H1 (cell line): ENCODE measurements at regions of chr10 and their contacts with region 1.

Region 1: GRCh38 chr10:511101-511848 is 178.2 kb downstream of the DIP2C start:
- DNase-seq: peak; percentile 94 to 97
- H3K4me3 ChIP-seq: no peak overlapping the region
- H3K27ac ChIP-seq: no peak overlapping the region
- H3K4me1 ChIP-seq: no peaks in the 10 kb centered on the region; a peak in 2 of 7 replicates
- H3K27me3 ChIP-seq: peaks cover 23 to 45% (median 38%) of the 10 kb centered on the region in 4 experiments
- CTCF ChIP-seq: peak; percentile 92 to 99 (median 99)
- EP300 ChIP-seq: no peak
- POLR2A ChIP-seq: no peak
- RAD21 ChIP-seq: peak; percentile 89 to 95

Region 2: DNA sequence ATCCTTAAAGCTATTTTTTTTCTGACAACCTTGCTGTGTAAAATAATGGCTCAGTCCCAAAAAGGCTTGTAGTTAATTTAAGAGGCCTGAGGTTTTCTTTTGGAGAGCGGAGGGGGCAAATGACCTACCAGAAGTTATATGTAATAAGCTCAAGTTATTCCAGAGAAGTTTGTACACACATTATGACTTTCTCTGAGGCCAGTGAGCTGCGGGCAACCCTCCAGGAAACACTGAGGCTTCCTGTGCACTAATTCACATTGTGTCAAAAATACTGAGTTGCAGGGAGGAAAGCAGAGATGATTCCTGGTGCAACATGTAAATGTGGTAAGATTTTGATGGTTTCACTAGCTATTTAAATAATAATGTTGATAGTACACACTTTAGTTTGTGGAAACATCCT is 10.4 kb before region 1 on chr10:
- CTCF ChIA-PET with region 1: interaction called, 12 read pairs
- POLR2A ChIA-PET with region 1: no interaction called
- DNase-seq: no peak
- H3K4me3 ChIP-seq: no peak overlapping the region
- H3K27ac ChIP-seq: no peak overlapping the region
- H3K4me1 ChIP-seq: peaks cover 0 to 6% (median 3%) of the 10 kb centered on the region in 4 experiments; a peak in 2 of 7 replicates
- H3K27me3 ChIP-seq: peaks cover 8 to 33% (median 30%) of the 10 kb centered on the region in 4 experiments
- CTCF ChIP-seq: no peak
- EP300 ChIP-seq: no peak
- POLR2A ChIP-seq: no peak
- RAD21 ChIP-seq: no peak

Region 3: GRCh38 chr10:525565-526315 is 14.5 kb after region 1 on chr10:
- CTCF ChIA-PET with region 1: interaction called, 10 read pairs
- POLR2A ChIA-PET with region 1: no interaction called
- DNase-seq: no peak
- H3K4me3 ChIP-seq: no peak overlapping the region
- H3K27ac ChIP-seq: no peak overlapping the region
- H3K4me1 ChIP-seq: no peaks in the 10 kb centered on the region; a peak in 1 of 7 replicates
- H3K27me3 ChIP-seq: no peaks in the 10 kb centered on the region
- CTCF ChIP-seq: no peak
- EP300 ChIP-seq: no peak
- POLR2A ChIP-seq: no peak
- RAD21 ChIP-seq: no peak